IMR-90 (cell line): ENCODE measurements at regions of chr17 and their contacts with region 1.

Region 1: GRCh38 chr17:36566081-36566480 is 21.4 kb downstream of the GGNBP2 start:
- DNase-seq: no peak
- ATAC-seq: no peak
- H3K4me3 ChIP-seq: no peak overlapping the region
- H3K27ac ChIP-seq: no peak overlapping the region
- H3K4me1 ChIP-seq: no peaks in the 10 kb centered on the region
- H3K27me3 ChIP-seq: no peaks in the 10 kb centered on the region
- CTCF ChIP-seq: no peak
- POLR2A ChIP-seq: no peak
- RAD21 ChIP-seq: no peak

Region 2: DNA sequence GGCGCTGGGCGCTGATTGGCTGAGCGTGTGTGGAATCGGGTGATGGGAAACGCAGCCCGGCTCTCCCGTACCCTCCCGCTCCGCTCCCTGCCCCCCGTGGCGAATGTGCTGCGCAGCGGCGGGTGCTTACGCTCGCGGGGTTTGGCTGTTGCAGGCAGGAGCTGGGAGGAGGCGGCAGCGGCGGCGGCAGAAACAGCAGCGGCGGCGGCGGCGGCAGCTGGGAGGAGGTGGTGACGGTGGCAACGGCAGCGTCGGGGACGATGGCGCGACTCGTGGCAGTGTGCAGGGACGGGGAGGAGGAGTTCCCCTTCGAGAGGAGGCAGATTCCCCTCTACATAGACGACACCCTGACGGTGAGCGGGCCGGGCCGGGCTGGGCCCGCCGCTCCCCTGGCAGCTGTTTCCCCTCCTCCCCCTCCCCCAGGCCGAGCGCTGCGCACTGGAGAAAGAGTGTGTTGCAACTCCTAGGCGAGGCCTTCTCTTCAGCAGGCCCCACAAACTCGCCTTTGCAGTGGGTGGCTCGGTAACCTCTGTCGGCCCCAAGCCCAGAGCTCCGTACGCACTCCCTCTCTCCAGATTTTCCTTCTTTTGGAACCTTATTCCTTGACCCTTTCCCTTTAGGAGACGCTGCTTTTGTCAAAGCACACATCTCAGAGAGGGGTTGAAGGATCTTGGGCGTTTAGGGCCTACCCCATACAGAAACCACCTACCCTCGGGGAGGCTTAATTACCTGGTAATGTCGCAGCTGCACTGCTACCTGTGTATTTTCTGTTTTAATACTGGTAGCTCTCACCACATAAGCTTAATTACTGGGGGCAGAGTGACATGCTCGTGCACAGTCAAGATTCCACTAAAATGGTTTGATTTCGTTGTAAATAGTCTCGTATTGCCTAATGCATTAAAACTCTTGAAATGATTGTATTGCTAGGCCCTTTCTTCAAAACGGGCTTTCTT is 20.3 kb before region 1 on chr17:
- CTCF ChIA-PET with region 1: no interaction called
- POLR2A ChIA-PET with region 1: interaction called, 3 read pairs
- dilution Hi-C with region 1: no loop called
- in situ Hi-C with region 1: no loop called
- intact Hi-C with region 1: loop called (anchors 2 kb)
- DNase-seq: peak; percentile 98
- ATAC-seq: peak; percentile 84
- H3K4me3 ChIP-seq: peak overlapping the region; percentile 86
- H3K27ac ChIP-seq: peak overlapping the region; percentile 96
- H3K4me1 ChIP-seq: no peaks in the 10 kb centered on the region; the same call in 1 of the 2 replicates
- H3K27me3 ChIP-seq: no peaks in the 10 kb centered on the region
- CTCF ChIP-seq: no peak
- POLR2A ChIP-seq: no peak
- RAD21 ChIP-seq: no peak

Region 3: GRCh38 chr17:36578671-36579070 is 12.6 kb after region 1 on chr17:
- CTCF ChIA-PET with region 1: no interaction called
- POLR2A ChIA-PET with region 1: no interaction called
- dilution Hi-C with region 1: no loop called
- in situ Hi-C with region 1: no loop called
- intact Hi-C with region 1: loop called (anchors 2 kb)
- DNase-seq: peak; percentile 44
- ATAC-seq: peak; percentile 66
- H3K4me3 ChIP-seq: no peak overlapping the region
- H3K27ac ChIP-seq: no peak overlapping the region
- H3K4me1 ChIP-seq: no peaks in the 10 kb centered on the region
- H3K27me3 ChIP-seq: no peaks in the 10 kb centered on the region
- CTCF ChIP-seq: no peak
- POLR2A ChIP-seq: no peak
- RAD21 ChIP-seq: no peak